Cardiac septum (tissue), 1 donor: ENCODE measurements at regions of chr10 and their contacts with region 1.

Region 1: GRCh38 chr10:60944159-60944909 is at the start of gene RHOBTB1:
- DNase-seq: peak; percentile 90
- total RNA-seq, gene RHOBTB1: 16.3 TPM

Region 2: GRCh38 chr10:60901561-60902235 is 42.6 kb before region 1 on chr10:
- intact Hi-C with region 1: loop called (anchors 2 kb)
- DNase-seq: peak; percentile 92

Region 3: DNA sequence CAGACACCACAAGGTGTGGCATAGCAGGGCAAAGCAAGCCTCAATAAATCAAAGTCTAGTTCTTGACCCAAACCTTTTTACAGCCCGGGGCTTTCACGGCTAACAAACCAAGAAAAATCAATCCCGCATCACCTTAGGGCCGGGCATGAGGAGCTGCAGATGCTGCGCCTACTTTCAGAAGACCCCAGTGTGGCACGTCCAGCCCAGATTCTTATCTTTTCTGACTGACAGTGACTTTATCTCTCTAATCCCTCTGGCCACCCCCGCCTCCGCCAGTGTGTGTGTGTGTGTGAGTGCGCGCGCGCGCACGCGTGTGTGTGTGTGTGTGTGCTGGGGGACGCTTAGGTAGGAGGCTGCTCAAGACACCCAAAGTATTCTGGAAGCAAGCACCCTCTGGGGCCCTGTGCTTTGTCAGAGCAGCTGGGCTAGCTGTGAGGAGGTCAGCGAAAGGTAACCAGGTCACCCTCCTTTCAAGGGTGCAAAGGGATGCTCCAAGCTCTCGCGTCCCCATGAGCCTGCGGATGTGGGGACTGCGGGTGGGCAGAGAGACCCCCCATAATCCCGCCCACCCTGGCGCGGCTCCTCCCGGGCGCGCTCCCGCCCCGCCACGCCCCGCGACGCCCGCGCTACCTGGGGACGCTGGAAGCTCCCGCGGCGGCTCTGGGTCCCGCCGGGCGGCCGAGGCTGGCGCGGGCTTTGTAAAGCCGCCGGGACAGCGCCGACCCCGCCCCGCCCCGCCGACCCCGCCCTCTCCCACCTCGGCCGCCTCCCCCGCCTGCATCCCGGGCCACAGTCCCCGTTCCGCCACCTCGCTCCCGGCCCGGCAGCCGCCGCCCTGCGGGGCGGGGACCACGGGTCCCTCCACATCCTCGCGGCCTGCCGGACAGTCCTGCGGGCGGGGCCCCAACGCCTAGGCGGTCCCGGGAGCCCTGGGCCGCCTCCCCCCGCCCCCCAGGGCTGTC is 56.7 kb after region 1 on chr10:
- intact Hi-C with region 1: no loop called
- DNase-seq: no peak